ENCODE measurements at regions of chr16 and their contacts with region 1.

Region 1: GRCh38 chr16:69396187-69397061 is 10.6 kb upstream of the TERF2 start:
- DNase-seq: peak; percentile 65 to 74
- H3K4me3 ChIP-seq: no peak overlapping the region
- H3K27ac ChIP-seq: peak overlapping the region; percentile 30 to 79 (median 64)
- H3K4me1 ChIP-seq: peaks cover 19 to 29% of the 10 kb centered on the region in 2 donors
- H3K27me3 ChIP-seq: no peaks in the 10 kb centered on the region
- CTCF ChIP-seq: peak in 5 of 6 experiments; percentile 37 to 81 (median 62)
- POLR2A ChIP-seq: no peak

Region 2: GRCh38 chr16:69453936-69454335 is 57.5 kb after region 1 on chr16:
- intact Hi-C with region 1: no loop called
- DNase-seq: no peak
- H3K4me3 ChIP-seq: no peak overlapping the region
- H3K27ac ChIP-seq: no peak overlapping the region
- H3K4me1 ChIP-seq: peaks cover 6 to 9% of the 10 kb centered on the region in 2 donors
- H3K27me3 ChIP-seq: no peaks in the 10 kb centered on the region
- CTCF ChIP-seq: no peak
- POLR2A ChIP-seq: no peak

Region 3: DNA sequence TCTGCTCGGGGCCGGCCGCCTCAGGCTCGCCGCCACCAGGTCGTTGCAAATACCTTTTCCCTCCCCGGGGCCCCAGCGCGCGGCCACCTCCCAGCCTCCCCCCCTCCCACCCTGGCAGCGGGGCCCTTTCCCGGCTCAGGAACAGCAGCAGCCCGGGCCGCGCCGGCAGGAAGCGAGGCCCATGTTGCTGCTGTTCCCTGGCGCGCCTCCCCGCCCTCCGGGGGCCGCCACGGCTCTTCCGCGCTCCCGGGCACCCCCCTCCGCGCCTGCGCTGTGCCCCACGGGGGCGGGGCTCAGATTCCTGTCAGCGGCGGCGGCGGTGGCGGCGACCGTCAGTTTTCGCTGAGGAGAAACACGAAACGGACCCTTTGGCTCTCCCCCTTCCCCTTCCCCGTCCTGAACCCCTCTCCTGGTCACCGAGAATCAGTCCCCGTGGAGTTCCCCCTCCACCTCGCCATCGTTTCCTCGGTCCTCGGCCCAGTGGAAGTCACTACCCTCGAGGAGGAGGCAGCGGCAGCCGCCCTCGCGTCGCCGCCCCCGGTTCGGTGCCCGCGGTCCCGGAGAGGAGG is 169.3 kb after region 1 on chr16 and contains the start of gene NFAT5:
- intact Hi-C with region 1: loop called (anchors 10 kb)
- DNase-seq: peak; percentile 88 to 90
- H3K4me3 ChIP-seq: peak within 1 kb of the TSS; percentile 93 to 100 (median 96)
- H3K27ac ChIP-seq: peak within 1 kb of the TSS; percentile 96 to 99 (median 98)
- H3K4me1 ChIP-seq: peaks cover 27 to 45% of the 10 kb centered on the region in 2 donors
- H3K27me3 ChIP-seq: no peaks in the 10 kb centered on the region
- CTCF ChIP-seq: no peak
- POLR2A ChIP-seq: peak; percentile 95 to 97
- total RNA-seq, gene NFAT5: 76.1 to 122 (median 102) TPM

Region 4: DNA sequence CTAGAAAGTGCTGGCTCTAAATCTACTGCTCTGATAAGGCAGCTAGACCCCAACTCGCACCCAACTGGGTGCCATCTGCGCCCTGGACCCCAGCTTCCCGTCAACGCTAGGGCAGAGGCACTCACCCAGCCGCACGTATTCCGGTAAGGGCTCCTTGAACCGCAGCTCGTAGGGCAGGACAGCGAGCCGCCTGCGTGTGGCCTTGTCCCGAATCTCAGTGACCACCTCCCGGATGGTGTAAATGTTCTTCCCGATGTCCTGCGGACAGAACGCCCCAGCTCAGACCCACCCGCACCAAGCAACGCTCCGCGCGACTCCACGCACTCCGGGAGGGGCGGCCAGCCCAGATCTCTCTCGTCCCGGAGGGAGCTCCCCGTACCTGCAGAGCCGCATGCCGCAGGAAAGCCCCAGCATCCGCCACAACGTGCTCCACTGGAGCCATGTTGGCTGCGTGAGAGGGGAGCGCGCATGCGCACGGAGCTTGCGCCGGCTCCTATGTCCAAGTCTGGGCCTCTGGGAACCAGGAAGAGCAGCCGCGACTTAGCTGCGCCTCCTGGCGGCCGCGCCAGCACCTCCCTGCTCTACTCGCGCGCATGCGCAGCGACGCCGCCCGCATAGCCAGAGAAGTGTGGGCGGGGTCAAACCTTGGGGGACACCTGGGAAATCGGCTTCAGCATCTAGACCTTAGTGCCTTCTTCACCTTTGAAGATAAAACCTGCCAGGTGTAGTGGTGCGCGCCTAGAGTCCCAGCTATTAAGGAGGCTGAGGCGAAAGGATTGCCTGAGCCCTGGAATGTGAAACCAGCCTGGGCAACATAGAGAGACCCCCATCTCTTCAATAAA is 358.3 kb after region 1 on chr16 and contains the start of gene NOB1:
- intact Hi-C with region 1: loop called (anchors 5 kb)
- DNase-seq: peak; percentile 95 to 96
- H3K4me3 ChIP-seq: peak within 1 kb of the TSS; percentile 21 to 75 (median 69)
- H3K27ac ChIP-seq: peak within 1 kb of the TSS; percentile 22 to 50 (median 45)
- H3K4me1 ChIP-seq: peaks cover 9 to 15% of the 10 kb centered on the region in 2 donors
- H3K27me3 ChIP-seq: no peaks in the 10 kb centered on the region
- CTCF ChIP-seq: peak; percentile 89 to 100 (median 98)
- POLR2A ChIP-seq: peak in 1 of 2 donors; percentile 67
- total RNA-seq, gene NOB1: 37.4 to 51.2 (median 43.1) TPM

Measured in thyroid gland (tissue), 4 donors.